Transverse colon (tissue), 4 donors: ENCODE measurements at regions of chr5 and their contacts with region 1.

Region 1: GRCh38 chr5:25688156-25688555 is 1043.4 kb upstream of the CDH10 start:
- DNase-seq: no peak
- H3K4me3 ChIP-seq: no peak overlapping the region
- H3K27ac ChIP-seq: no peak overlapping the region
- H3K4me1 ChIP-seq: no peaks in the 10 kb centered on the region
- H3K27me3 ChIP-seq: no peaks in the 10 kb centered on the region
- CTCF ChIP-seq: no peak
- EP300 ChIP-seq: no peak
- POLR2A ChIP-seq: no peak

Region 2: GRCh38 chr5:25539536-25539935 is 148.6 kb before region 1 on chr5:
- in situ Hi-C with region 1: no loop called
- intact Hi-C with region 1: no loop called
- DNase-seq: no peak
- H3K4me3 ChIP-seq: no peak overlapping the region
- H3K27ac ChIP-seq: no peak overlapping the region
- H3K4me1 ChIP-seq: no peaks in the 10 kb centered on the region
- H3K27me3 ChIP-seq: no peaks in the 10 kb centered on the region
- CTCF ChIP-seq: no peak
- EP300 ChIP-seq: no peak
- POLR2A ChIP-seq: no peak

Region 3: GRCh38 chr5:25649628-25650265 is 38.4 kb before region 1 on chr5:
- in situ Hi-C with region 1: no loop called
- intact Hi-C with region 1: loop called (anchors 1 kb)
- DNase-seq: no peak
- H3K4me3 ChIP-seq: no peak overlapping the region
- H3K27ac ChIP-seq: no peak overlapping the region
- H3K4me1 ChIP-seq: no peaks in the 10 kb centered on the region
- H3K27me3 ChIP-seq: no peaks in the 10 kb centered on the region
- CTCF ChIP-seq: no peak
- EP300 ChIP-seq: no peak
- POLR2A ChIP-seq: no peak

Region 4: DNA sequence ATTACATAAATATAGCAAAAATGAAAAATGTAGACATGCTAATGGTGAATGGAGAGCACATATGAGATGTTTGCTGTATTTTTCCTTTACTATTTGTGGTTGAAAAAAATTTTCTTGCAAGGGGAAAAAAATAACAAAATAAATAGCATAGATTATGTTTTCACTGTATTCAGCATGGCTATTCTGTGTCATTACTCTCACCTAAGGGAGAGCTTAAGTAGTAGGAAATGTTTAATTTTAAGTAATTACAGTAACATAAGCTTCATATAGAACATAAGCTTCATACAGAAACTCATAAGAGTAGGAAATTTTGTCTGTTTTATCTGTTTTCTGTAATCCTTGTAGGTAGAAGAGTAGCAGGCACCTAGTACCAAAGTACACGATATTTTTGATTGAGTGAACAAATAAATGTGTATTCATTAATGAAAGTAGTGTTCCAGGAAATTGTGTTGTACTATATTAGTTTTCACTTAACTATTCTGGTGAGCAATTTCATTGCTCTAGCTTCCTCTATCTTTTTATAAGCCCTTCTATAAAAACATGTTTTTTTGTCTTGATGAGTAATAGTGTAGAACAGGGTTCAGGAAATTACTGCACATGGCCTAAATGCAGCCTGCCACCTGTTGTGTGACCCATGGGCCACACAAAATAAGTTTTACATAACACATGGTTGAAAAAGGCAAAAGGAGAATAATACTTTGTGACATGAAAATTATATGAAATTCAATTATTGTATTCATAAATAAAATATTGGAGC is 18.3 kb before region 1 on chr5:
- in situ Hi-C with region 1: no loop called
- intact Hi-C with region 1: no loop called
- DNase-seq: no peak
- H3K4me3 ChIP-seq: no peak overlapping the region
- H3K27ac ChIP-seq: no peak overlapping the region
- H3K4me1 ChIP-seq: no peaks in the 10 kb centered on the region
- H3K27me3 ChIP-seq: no peaks in the 10 kb centered on the region
- CTCF ChIP-seq: no peak
- EP300 ChIP-seq: no peak
- POLR2A ChIP-seq: no peak

Region 5: GRCh38 chr5:25744908-25745307 is 56.8 kb after region 1 on chr5:
- in situ Hi-C with region 1: no loop called
- intact Hi-C with region 1: no loop called
- DNase-seq: no peak
- H3K4me3 ChIP-seq: no peak overlapping the region
- H3K27ac ChIP-seq: no peak overlapping the region
- H3K4me1 ChIP-seq: no peaks in the 10 kb centered on the region
- H3K27me3 ChIP-seq: no peaks in the 10 kb centered on the region
- CTCF ChIP-seq: no peak
- EP300 ChIP-seq: no peak
- POLR2A ChIP-seq: no peak